Left colon (tissue), 2 donors: ENCODE measurements at regions of chr14 and their contacts with region 1.

Region 1: GRCh38 chr14:21104448-21105060 is 3.7 kb downstream of the TMEM253 start:
- DNase-seq: peak; percentile 84
- ATAC-seq: peak; percentile 62

Region 2: GRCh38 chr14:21068521-21069387 is 35.8 kb before region 1 on chr14:
- intact Hi-C with region 1: loop called in 1 of 2 experiments (anchors 5 kb)
- DNase-seq: peak; percentile 58 to 63
- ATAC-seq: peak; percentile 30

Region 3: GRCh38 chr14:21317398-21317797 is 212.8 kb after region 1 on chr14:
- intact Hi-C with region 1: no loop called
- DNase-seq: no peak
- ATAC-seq: no peak